Activated B cell treated with CpG ODN at 0.5 μM for 24 hours (primary cell): ENCODE measurements at regions of chr14 and their contacts with region 1.

Region 1: GRCh38 chr14:104926619-104927431 is 2.1 kb downstream of the PLD4 start:
- DNase-seq: peak; percentile 60
- ATAC-seq: peak; percentile 58
- H3K4me3 Mint-ChIP-seq: peak overlapping the region; percentile 88
- H3K27ac Mint-ChIP-seq: peak overlapping the region; percentile 91
- H3K4me1 Mint-ChIP-seq: peaks cover 61% of the 10 kb centered on the region
- H3K27me3 Mint-ChIP-seq: no peaks in the 10 kb centered on the region
- CTCF ChIP-seq: no peak

Region 2: GRCh38 chr14:104657101-104657524 is 269.7 kb before region 1 on chr14:
- CTCF ChIA-PET with region 1: no interaction called
- POLR2A ChIA-PET with region 1: interaction called, 4 read pairs
- intact Hi-C with region 1: loop called (anchors 2 kb)
- DNase-seq: peak; percentile 68
- ATAC-seq: peak; percentile 60
- H3K4me3 Mint-ChIP-seq: peak overlapping the region; percentile 79
- H3K27ac Mint-ChIP-seq: peak overlapping the region; percentile 98
- H3K4me1 Mint-ChIP-seq: peaks cover 85% of the 10 kb centered on the region
- H3K27me3 Mint-ChIP-seq: no peaks in the 10 kb centered on the region
- CTCF ChIP-seq: no peak

Region 3: DNA sequence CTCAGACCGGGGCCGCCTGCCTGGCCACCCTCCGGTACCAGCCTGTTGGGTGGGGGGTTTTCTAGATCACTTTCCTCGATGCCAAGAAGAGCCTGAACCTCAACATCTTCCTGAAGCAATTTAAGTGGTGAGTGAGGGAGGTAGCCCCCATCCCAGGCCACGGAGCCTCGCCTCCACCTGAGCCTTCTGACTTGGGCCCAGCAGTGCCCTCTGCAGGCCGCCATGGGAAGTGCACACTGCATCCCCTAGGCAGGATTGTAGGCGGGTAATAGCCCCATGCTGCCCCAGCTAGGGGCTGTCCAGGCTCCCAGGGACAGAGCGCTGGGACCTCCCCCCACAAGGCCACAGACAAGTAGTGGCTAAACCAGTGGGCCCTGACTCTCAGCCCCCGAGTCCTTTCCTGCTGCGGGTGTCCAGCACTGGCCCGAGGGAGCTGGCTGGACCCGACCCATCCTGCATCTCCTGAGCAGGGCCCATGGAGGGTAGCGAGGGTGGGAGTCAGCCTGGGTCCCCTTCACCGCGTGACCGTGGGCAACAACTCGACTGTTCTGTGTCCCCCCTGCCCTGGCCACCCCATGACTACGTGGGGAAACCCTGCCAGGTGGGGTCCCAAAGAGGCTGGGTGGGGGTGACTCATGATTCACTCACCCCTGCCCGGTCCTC is 218.1 kb before region 1 on chr14:
- CTCF ChIA-PET with region 1: no interaction called
- POLR2A ChIA-PET with region 1: no interaction called
- intact Hi-C with region 1: no loop called
- DNase-seq: peak; percentile 72
- ATAC-seq: peak; percentile 98
- H3K4me3 Mint-ChIP-seq: no peak overlapping the region
- H3K27ac Mint-ChIP-seq: no peak overlapping the region
- H3K4me1 Mint-ChIP-seq: peaks cover 3% of the 10 kb centered on the region
- H3K27me3 Mint-ChIP-seq: no peaks in the 10 kb centered on the region
- CTCF ChIP-seq: no peak

Region 4: GRCh38 chr14:104826189-104826860 is 100.5 kb before region 1 on chr14:
- CTCF ChIA-PET with region 1: no interaction called
- POLR2A ChIA-PET with region 1: no interaction called
- intact Hi-C with region 1: loop called (anchors 5 kb)
- DNase-seq: peak; percentile 97
- ATAC-seq: peak; percentile 87
- H3K4me3 Mint-ChIP-seq: peak overlapping the region; percentile 77
- H3K27ac Mint-ChIP-seq: no peak overlapping the region
- H3K4me1 Mint-ChIP-seq: peaks cover 20% of the 10 kb centered on the region
- H3K27me3 Mint-ChIP-seq: peaks cover 9% of the 10 kb centered on the region
- CTCF ChIP-seq: no peak

Region 5: DNA sequence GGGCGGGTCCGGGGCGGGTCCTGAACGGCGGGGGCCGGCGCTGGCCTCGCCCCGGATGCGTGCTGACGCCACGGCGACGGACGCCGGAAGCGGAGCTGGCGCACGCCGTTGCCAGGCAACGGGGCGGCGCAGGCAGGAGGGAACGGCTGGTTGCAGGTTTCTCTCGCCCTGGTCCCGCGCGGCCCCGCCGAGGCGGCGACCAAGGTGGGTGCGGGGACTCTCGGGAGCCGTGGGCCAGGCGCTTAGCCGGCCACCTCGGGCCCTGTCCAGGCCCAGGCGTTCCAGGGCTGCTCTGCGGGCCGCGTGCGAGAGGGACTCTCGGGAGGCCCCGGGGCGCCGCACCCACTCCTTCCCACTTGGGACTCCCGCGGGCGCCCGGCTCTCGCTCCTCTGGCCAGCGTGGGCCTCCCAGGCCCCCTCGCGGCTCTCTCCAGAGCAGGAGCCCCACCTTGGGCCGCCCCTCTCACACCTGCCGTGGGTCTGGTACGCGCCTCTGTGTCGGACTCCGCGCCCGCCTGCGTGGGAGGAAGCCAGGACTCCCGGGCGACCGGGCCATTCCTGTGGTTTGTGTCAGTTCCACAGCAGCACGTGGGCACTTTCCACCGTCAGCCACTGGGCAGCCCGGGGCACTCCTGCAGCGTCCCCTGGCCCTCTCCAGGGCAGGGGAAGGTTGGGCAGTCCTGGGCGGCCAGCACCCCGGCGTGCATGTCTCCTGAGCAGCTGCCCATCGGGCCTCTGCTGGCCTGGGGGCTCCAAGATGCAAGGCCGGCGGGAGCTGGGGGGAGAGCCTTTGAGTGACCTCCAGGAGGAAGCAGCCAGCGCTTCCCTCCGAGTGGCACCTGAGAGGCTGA is 59.1 kb after region 1 on chr14 and contains the start of gene CLBA1:
- CTCF ChIA-PET with region 1: no interaction called
- POLR2A ChIA-PET with region 1: interaction called, 4 read pairs
- intact Hi-C with region 1: loop called (anchors 1 kb)
- DNase-seq: peak; percentile 88
- ATAC-seq: peak; percentile 92
- H3K4me3 Mint-ChIP-seq: peak within 1 kb of the TSS; percentile 72
- H3K27ac Mint-ChIP-seq: peak within 1 kb of the TSS; percentile 71
- H3K4me1 Mint-ChIP-seq: peaks cover 11% of the 10 kb centered on the region
- H3K27me3 Mint-ChIP-seq: peaks cover 5% of the 10 kb centered on the region
- CTCF ChIP-seq: no peak
- total RNA-seq, gene CLBA1: 2.7 and 3.9 TPM in 2 replicates

Region 6: GRCh38 chr14:105026803-105027563 is 100.2 kb after region 1 on chr14:
- CTCF ChIA-PET with region 1: no interaction called
- POLR2A ChIA-PET with region 1: no interaction called
- intact Hi-C with region 1: no loop called
- DNase-seq: no peak
- ATAC-seq: no peak
- H3K4me3 Mint-ChIP-seq: no peak overlapping the region
- H3K27ac Mint-ChIP-seq: no peak overlapping the region
- H3K4me1 Mint-ChIP-seq: peaks cover 32% of the 10 kb centered on the region
- H3K27me3 Mint-ChIP-seq: no peaks in the 10 kb centered on the region
- CTCF ChIP-seq: no peak

Region 7: DNA sequence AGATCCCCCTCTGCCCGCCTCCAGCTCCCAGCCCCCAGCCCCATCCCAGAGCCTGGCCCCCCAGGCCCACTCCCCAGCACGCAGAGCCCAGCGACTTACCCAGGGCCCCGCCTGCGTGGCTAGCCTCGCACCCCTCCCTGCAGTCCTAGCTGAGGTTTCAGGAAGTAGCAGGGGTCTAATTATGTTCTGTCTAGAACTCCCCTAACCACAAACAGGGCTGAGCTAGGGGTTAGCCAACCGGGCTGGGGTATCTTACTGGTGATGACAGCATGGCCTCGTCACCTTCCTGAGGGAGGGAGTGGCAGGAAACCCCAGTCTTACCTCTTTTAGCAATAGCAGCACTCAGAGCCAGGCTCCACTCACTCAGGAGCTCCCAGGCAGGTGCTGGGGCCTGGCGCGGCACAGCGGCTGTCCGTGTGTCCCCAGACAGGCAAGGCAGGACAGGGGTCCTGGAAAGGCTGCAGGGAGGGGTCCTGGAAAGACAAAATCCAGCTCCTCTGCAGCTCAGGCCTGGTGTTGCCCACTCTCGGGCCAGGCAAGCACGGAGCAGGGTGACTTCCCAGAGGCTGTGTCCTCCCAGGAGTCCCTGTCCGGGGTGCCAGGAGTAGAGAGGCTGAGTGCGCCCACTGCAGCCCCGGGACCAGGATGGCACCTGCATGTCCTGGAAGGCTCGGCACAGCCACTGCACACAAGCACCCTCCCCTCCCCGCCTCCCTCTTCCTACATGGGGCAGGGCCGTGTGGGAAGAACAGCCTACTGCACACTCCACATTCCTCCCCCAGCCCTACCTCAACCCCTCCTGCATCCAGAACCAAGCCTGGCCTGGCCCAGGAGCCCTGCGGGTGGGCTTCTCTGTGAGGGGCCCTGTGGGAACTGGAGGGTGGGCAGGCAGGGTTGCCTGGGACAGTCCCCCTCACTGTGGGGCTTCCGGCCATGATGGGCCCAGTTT is 138.7 kb after region 1 on chr14 and contains the start of gene GPR132:
- CTCF ChIA-PET with region 1: no interaction called
- POLR2A ChIA-PET with region 1: interaction called, 29 read pairs
- intact Hi-C with region 1: loop called (anchors 5 kb)
- DNase-seq: peak; percentile 66
- ATAC-seq: peak; percentile 73
- H3K4me3 Mint-ChIP-seq: peak within 1 kb of the TSS; percentile 90
- H3K27ac Mint-ChIP-seq: peak within 1 kb of the TSS; percentile 89
- H3K4me1 Mint-ChIP-seq: peaks cover 88% of the 10 kb centered on the region
- H3K27me3 Mint-ChIP-seq: no peaks in the 10 kb centered on the region
- CTCF ChIP-seq: no peak
- total RNA-seq, gene GPR132: 43.4 and 48.5 TPM in 2 replicates

Region 8: GRCh38 chr14:105180592-105181548 is 254.0 kb after region 1 on chr14 and contains the start of gene NUDT14:
- CTCF ChIA-PET with region 1: no interaction called
- POLR2A ChIA-PET with region 1: no interaction called
- intact Hi-C with region 1: no loop called
- DNase-seq: peak; percentile 86
- ATAC-seq: peak; percentile 95
- H3K4me3 Mint-ChIP-seq: peak within 1 kb of the TSS; percentile 76
- H3K27ac Mint-ChIP-seq: no peak within 1 kb of the TSS
- H3K4me1 Mint-ChIP-seq: peaks cover 9% of the 10 kb centered on the region
- H3K27me3 Mint-ChIP-seq: peaks cover 5% of the 10 kb centered on the region
- CTCF ChIP-seq: no peak
- total RNA-seq, gene NUDT14: 15.1 and 15.2 TPM in 2 replicates